T-cell (primary cell): ENCODE measurements at regions of chr7 and their contacts with region 1.

Region 1: GRCh38 chr7:108497082-108497725 is 28.7 kb downstream of the PNPLA8 start:
- DNase-seq: peak in 26 of 35 experiments; percentile 2 to 74 (median 30)
- ATAC-seq: peak; percentile 40 to 53 (median 42)
- H3K4me3 ChIP-seq: no peak overlapping the region
- H3K4me3 Mint-ChIP-seq: no peak overlapping the region
- H3K27ac ChIP-seq: no peak overlapping the region
- H3K27ac Mint-ChIP-seq: no peak overlapping the region
- H3K4me1 ChIP-seq: no peaks in the 10 kb centered on the region
- H3K4me1 Mint-ChIP-seq: peaks cover 0 to 4% (median 3%) of the 10 kb centered on the region in 3 donors
- H3K27me3 ChIP-seq: no peaks in the 10 kb centered on the region
- H3K27me3 Mint-ChIP-seq: no peaks in the 10 kb centered on the region

Region 2: GRCh38 chr7:107035446-107035845 is 1461.8 kb before region 1 on chr7:
- CTCF ChIA-PET with region 1: no interaction called
- POLR2A ChIA-PET with region 1: interaction called in 1 of 2 experiments, 11 read pairs
- DNase-seq: no peak
- ATAC-seq: no peak
- H3K4me3 ChIP-seq: no peak overlapping the region
- H3K4me3 Mint-ChIP-seq: no peak overlapping the region
- H3K27ac ChIP-seq: no peak overlapping the region
- H3K27ac Mint-ChIP-seq: no peak overlapping the region
- H3K4me1 ChIP-seq: no peaks in the 10 kb centered on the region
- H3K4me1 Mint-ChIP-seq: no peaks in the 10 kb centered on the region
- H3K27me3 ChIP-seq: no peaks in the 10 kb centered on the region
- H3K27me3 Mint-ChIP-seq: no peaks in the 10 kb centered on the region

Region 3: DNA sequence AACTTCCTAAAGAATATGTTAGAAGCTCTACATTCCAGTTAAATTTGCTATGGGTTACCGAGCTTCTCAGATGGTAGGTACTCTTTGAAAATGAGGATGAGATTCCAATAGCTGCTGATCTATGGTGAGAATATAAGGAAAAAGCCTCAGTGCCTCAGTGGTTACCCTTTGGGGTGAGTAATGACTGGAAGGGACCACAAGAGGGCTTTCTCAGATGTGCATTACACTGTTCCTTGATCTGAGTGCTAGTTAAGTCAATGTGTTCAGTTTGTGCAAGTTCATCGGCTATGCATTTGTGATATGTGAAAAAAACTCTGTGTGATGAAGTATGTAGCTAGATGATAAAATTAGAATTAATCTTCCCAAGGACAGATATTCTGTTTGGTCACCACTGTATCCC is 44.5 kb before region 1 on chr7:
- CTCF ChIA-PET with region 1: interaction called, 22 to 53 read pairs
- POLR2A ChIA-PET with region 1: no interaction called
- DNase-seq: peak in 6 of 35 experiments; percentile 10 to 59 (median 16)
- ATAC-seq: peak; percentile 29 to 53 (median 46)
- H3K4me3 ChIP-seq: no peak overlapping the region
- H3K4me3 Mint-ChIP-seq: no peak overlapping the region
- H3K27ac ChIP-seq: no peak overlapping the region
- H3K27ac Mint-ChIP-seq: no peak overlapping the region
- H3K4me1 ChIP-seq: peaks cover 10 to 11% of the 10 kb centered on the region in 2 experiments
- H3K4me1 Mint-ChIP-seq: peaks cover 18 to 30% (median 22%) of the 10 kb centered on the region in 3 donors
- H3K27me3 ChIP-seq: peaks cover 17 to 25% of the 10 kb centered on the region in 2 experiments
- H3K27me3 Mint-ChIP-seq: peaks cover 30 to 50% of the 10 kb centered on the region in 2 donors

Region 4: GRCh38 chr7:108486291-108486966 is 10.8 kb before region 1 on chr7:
- CTCF ChIA-PET with region 1: interaction called, 4 to 10 read pairs
- POLR2A ChIA-PET with region 1: interaction called in 1 of 2 experiments, 3 read pairs
- DNase-seq: no peak
- ATAC-seq: no peak
- H3K4me3 ChIP-seq: no peak overlapping the region
- H3K4me3 Mint-ChIP-seq: no peak overlapping the region
- H3K27ac ChIP-seq: no peak overlapping the region
- H3K27ac Mint-ChIP-seq: no peak overlapping the region
- H3K4me1 ChIP-seq: no peaks in the 10 kb centered on the region
- H3K4me1 Mint-ChIP-seq: no peaks in the 10 kb centered on the region
- H3K27me3 ChIP-seq: no peaks in the 10 kb centered on the region
- H3K27me3 Mint-ChIP-seq: no peaks in the 10 kb centered on the region

Region 5: GRCh38 chr7:108511939-108512338 is 14.7 kb after region 1 on chr7:
- CTCF ChIA-PET with region 1: interaction called in 1 of 2 experiments, 14 read pairs
- POLR2A ChIA-PET with region 1: interaction called in 1 of 2 experiments, 5 read pairs
- DNase-seq: no peak
- ATAC-seq: no peak
- H3K4me3 ChIP-seq: no peak overlapping the region
- H3K4me3 Mint-ChIP-seq: no peak overlapping the region
- H3K27ac ChIP-seq: no peak overlapping the region
- H3K27ac Mint-ChIP-seq: no peak overlapping the region
- H3K4me1 ChIP-seq: no peaks in the 10 kb centered on the region
- H3K4me1 Mint-ChIP-seq: peaks cover 12 to 25% (median 18%) of the 10 kb centered on the region in 3 donors
- H3K27me3 ChIP-seq: no peaks in the 10 kb centered on the region
- H3K27me3 Mint-ChIP-seq: no peaks in the 10 kb centered on the region

Region 6: DNA sequence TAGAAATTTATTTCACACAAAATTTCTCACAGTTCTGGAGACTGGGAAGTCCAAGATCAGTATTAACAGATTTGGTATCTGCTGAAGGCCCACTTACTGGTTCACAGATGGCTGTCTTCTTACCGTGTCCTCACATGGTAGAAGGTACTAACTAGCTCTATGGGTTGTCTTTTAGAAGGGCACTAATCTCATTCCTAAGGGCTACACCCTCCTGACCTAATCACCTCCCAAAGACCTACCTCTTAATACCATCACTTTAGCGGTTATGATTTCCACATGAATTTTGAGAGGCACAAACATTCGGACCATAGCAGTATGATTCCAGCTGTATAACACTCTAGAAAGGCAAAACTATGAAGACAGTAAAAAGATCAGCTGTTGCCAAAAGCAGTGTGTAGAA is 20.7 kb after region 1 on chr7:
- CTCF ChIA-PET with region 1: interaction called, 5 to 14 read pairs
- POLR2A ChIA-PET with region 1: interaction called in 1 of 2 experiments, 11 read pairs
- DNase-seq: no peak
- ATAC-seq: no peak
- H3K4me3 ChIP-seq: no peak overlapping the region
- H3K4me3 Mint-ChIP-seq: no peak overlapping the region
- H3K27ac ChIP-seq: no peak overlapping the region
- H3K27ac Mint-ChIP-seq: no peak overlapping the region
- H3K4me1 ChIP-seq: peaks cover 0 to under 1% of the 10 kb centered on the region in 2 experiments
- H3K4me1 Mint-ChIP-seq: peaks cover 50 to 61% (median 51%) of the 10 kb centered on the region in 3 donors
- H3K27me3 ChIP-seq: no peaks in the 10 kb centered on the region
- H3K27me3 Mint-ChIP-seq: no peaks in the 10 kb centered on the region

Region 7: DNA sequence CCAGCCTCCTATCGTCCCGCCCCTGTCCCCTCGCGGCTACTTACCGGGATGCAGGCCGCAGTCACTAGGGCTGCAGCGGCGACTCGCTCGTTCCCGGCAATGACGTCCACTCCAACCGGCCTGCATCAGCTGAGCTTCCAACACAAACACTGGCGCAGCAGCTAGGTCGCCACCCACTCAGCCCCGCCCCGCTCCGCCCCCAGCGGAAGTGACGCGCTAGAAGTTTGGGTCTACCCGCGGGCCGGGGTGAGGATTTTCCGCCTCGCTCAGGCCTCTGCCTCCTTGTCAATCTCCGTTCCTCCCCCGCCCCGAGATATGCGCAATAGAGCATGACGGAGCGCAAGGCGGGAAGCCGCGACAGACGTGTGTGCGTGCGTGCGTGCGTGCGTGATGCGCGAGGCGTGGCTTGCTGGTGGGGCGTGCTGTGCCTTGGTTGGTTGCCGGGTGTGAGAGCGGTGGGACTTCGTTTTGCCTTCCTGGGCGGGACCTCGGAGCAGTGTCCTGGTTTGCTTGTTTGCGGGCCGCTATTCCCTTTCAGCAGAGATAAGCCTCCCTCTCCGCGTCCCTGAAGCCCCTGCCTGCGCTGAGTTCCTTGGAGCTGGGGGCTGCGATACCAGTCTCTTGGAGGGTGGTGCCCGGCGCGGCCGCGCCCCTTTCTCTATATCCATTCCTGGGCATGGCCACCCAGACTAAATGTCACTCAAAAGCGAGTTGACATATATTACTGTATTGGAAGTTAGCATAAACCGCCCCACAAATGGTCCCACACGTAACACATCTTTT is 29.0 kb after region 1 on chr7 and contains the start of gene PNPLA8:
- CTCF ChIA-PET with region 1: interaction called in 1 of 2 experiments, 10 read pairs
- POLR2A ChIA-PET with region 1: interaction called in 1 of 2 experiments, 8 read pairs
- DNase-seq: peak; percentile 100
- ATAC-seq: peak; percentile 90 to 96 (median 94)
- H3K4me3 ChIP-seq: peak within 1 kb of the TSS; percentile 90 to 96
- H3K4me3 Mint-ChIP-seq: peak within 1 kb of the TSS; percentile 91 to 96 (median 95)
- H3K27ac ChIP-seq: peak within 1 kb of the TSS; percentile 99
- H3K27ac Mint-ChIP-seq: peak within 1 kb of the TSS; percentile 96 to 98
- H3K4me1 ChIP-seq: peaks cover 19% of the 10 kb centered on the region in 2 experiments
- H3K4me1 Mint-ChIP-seq: peaks cover 38 to 44% (median 42%) of the 10 kb centered on the region in 3 donors
- H3K27me3 ChIP-seq: no peaks in the 10 kb centered on the region
- H3K27me3 Mint-ChIP-seq: no peaks in the 10 kb centered on the region
- total RNA-seq, gene PNPLA8: 17.8 to 55.5 (median 21.8) TPM